ENCODE measurements at regions of chr7 and their contacts with region 1.

Region 1: GRCh38 chr7:33932832-33933468 is 27.6 kb downstream of the BMPER start:
- DNase-seq: peak; percentile 11 to 89
- H3K4me3 ChIP-seq: peak overlapping the region; percentile 32 to 50
- H3K27ac ChIP-seq: no peak overlapping the region
- H3K4me1 ChIP-seq: no peaks in the 10 kb centered on the region
- H3K27me3 ChIP-seq: no peaks in the 10 kb centered on the region
- CTCF ChIP-seq: peak; percentile 75 to 97 (median 95)

Region 2: DNA sequence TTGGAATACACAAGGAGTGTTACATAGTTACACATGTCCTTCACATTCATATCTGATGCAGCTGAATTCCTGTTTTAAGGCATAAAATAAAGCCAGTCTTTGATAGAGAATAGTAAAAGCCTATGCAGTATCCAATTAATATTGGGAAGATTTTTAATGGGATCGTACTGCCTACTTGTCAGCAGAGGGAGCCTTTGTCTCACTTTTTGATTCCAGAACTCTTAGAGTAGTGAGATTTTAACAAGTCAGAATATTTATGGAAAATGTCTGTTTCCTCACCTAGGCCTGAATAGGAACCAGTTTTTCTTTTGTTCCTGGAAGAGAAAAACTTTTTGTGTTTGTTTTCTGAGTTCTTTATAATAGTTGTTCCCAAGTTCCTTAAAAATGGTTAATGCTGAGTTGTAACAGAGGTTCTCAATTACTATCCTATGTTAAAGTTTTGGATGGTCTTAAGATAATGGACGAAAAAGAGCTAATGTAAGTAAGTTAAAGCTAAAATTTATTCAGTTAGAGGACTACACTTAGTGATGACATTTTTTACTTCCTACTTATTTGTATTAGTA is 689.5 kb before region 1 on chr7:
- intact Hi-C with region 1: loop called (anchors 2 kb)
- DNase-seq: no peak
- H3K4me3 ChIP-seq: no peak overlapping the region
- H3K27ac ChIP-seq: no peak overlapping the region
- H3K4me1 ChIP-seq: no peaks in the 10 kb centered on the region
- H3K27me3 ChIP-seq: no peaks in the 10 kb centered on the region
- CTCF ChIP-seq: peak; percentile 28 to 63 (median 39)

Region 3: DNA sequence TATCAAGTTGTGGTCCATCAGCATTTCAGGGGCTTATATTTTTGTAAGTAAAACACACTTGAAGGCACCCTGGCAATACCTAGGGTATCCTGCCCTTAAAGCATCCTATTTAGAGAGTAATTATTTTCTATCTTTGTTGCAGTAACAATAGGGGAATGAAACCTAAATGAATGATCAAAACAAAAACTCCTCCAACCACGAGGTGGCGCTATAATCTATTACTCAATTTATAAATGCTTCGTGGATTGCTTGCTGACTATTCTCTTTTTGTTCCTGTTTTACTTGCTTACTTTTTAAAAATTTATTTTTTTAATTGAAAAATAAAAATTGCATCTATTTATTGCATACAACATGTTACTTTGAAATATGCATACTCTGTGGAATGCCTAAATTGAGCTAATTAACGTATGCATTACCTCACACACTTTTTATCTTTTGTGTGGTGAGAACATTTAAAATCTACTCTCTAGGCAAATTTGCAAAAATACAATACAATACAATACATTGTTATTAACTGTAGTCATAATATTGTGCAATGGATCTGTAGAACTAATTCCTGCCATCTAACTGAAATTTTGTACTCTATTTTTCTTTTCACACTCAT is 175.3 kb before region 1 on chr7:
- intact Hi-C with region 1: loop called (anchors 1 kb)
- DNase-seq: no peak
- H3K4me3 ChIP-seq: no peak overlapping the region
- H3K27ac ChIP-seq: no peak overlapping the region
- H3K4me1 ChIP-seq: peaks cover 0 to 3% of the 10 kb centered on the region in 2 donors
- H3K27me3 ChIP-seq: no peaks in the 10 kb centered on the region
- CTCF ChIP-seq: peak; percentile 25 to 70 (median 60)

Region 4: DNA sequence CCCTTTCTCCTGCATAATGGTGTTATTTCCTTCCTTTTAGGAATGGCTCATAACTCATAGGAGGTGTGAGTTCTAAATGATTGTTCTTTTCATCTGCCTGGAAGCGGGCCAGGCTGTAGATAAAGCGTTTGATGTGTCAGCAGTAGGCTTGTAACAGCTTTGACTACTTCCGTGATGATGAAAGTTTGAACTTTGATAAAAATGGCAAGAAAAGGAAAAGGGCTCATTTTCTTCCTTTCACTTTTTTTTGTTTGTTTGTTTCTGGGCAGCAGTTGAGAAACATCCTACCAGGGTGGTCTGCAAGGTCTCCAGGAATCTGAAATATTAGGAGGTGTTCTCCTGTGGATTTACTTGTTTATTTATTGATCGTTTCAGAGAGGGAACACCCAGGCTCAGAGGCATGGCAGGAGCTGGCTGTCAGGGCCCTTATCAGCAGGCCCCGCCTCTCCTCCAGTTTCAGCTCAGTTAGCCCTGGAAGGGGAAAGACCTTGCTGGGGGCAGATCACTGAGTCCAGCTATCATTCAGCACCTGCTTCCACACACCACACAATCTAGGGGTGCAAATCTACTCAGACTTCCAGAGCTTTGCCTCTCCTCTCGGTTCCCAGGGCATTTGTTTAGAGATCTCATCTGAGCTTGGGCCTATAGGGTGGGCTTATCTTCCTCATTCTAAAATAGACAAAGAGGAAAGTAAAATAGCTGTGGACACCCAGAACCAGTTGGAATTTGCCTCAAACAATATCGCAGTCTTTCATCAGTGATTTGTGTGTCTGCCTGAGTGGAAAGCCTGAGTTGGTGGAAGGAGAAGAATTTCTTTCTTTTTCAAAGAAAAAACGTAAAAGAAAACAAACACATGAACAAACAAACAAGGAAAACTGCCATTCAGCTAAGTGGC is 103.3 kb after region 1 on chr7:
- intact Hi-C with region 1: no loop called
- DNase-seq: no peak
- H3K4me3 ChIP-seq: no peak overlapping the region
- H3K27ac ChIP-seq: no peak overlapping the region
- H3K4me1 ChIP-seq: no peaks in the 10 kb centered on the region
- H3K27me3 ChIP-seq: no peaks in the 10 kb centered on the region
- CTCF ChIP-seq: no peak

Measured in ascending aorta (tissue), 2 donors.